Mammary epithelial cell (primary cell): ENCODE measurements at regions of chr22 and their contacts with region 1.

Region 1: DNA sequence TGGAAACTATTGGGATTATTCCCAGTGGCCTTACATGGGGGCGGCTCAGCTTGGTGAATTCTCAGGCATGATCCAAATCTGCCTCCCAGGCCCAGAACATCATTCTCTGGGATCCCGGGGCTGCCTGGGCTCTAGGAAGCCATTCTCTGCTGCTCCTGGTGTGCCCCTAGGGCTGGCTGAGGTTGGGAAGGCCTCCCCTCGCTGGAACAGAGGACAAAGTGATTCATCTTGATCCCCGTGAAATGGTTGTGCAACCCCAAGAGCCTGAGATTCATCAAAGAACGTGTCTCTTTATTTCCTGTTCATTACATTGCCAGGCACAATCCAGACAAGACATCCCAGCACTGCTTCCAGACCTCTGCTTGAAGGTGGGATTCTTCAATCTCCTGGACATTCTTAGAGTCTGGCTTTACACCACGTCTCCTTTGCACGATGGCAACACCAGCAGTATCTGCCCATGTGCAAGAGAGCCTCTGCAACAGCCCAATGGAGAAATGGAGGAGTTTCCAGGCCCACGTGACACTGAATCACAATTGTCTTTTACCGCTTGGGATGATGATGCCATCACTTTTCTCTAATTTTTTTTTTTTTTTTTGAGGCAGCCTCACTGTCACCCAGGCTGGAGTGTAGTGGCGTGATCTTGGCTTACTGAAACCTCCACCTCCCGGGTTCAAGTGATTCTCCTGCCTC is 52.3 kb downstream of the TST start:
- DNase-seq: peak; percentile 41
- H3K4me3 ChIP-seq: no peak overlapping the region
- H3K27ac ChIP-seq: no peak overlapping the region
- H3K4me1 ChIP-seq: no peaks in the 10 kb centered on the region
- H3K27me3 ChIP-seq: no peaks in the 10 kb centered on the region
- CTCF ChIP-seq: no peak

Region 2: DNA sequence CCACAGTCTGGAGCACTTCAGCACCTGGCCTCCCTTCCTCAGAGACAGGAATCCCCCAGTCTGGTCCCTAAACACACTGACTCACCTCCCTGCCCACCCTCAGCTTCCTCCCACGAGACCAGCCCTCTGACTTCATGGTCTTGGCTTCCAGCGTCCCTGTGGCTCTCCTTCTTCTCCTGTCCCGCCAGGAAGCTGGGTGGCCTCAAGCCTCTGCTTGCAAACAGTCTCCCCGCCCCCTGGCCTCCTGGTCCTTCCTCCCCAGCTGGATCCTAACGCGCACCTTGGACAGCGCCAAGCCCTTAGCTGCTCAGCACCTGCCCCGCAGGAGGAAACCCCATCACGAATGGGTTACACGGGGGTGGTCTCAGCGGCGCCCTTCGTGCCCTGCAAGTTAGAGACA is 101.7 kb before region 1 on chr22:
- CTCF ChIA-PET with region 1: no interaction called
- dilution Hi-C with region 1: loop called (anchors 5 kb)
- in situ Hi-C with region 1: loop called in 1 of 2 experiments (anchors 10 kb)
- intact Hi-C with region 1: no loop called
- DNase-seq: peak; percentile 25
- H3K4me3 ChIP-seq: no peak overlapping the region
- H3K27ac ChIP-seq: no peak overlapping the region
- H3K4me1 ChIP-seq: peaks cover 9% of the 10 kb centered on the region
- H3K27me3 ChIP-seq: no peaks in the 10 kb centered on the region
- CTCF ChIP-seq: no peak

Region 3: GRCh38 chr22:36913427-36914389 is 53.3 kb before region 1 on chr22 and contains the start of gene CSF2RB:
- CTCF ChIA-PET with region 1: no interaction called
- dilution Hi-C with region 1: loop called (anchors 5 kb)
- in situ Hi-C with region 1: no loop called
- intact Hi-C with region 1: no loop called
- DNase-seq: no peak
- H3K4me3 ChIP-seq: no peak within 1 kb of the TSS
- H3K27ac ChIP-seq: no peak within 1 kb of the TSS
- H3K4me1 ChIP-seq: peaks cover 4% of the 10 kb centered on the region
- H3K27me3 ChIP-seq: no peaks in the 10 kb centered on the region
- CTCF ChIP-seq: no peak
- total RNA-seq, gene CSF2RB: not detected

Region 4: GRCh38 chr22:37007651-37008050 is 40.7 kb after region 1 on chr22:
- CTCF ChIA-PET with region 1: no interaction called
- dilution Hi-C with region 1: loop called (anchors 5 kb)
- in situ Hi-C with region 1: no loop called
- intact Hi-C with region 1: no loop called
- DNase-seq: no peak
- H3K4me3 ChIP-seq: no peak overlapping the region
- H3K27ac ChIP-seq: no peak overlapping the region
- H3K4me1 ChIP-seq: no peaks in the 10 kb centered on the region
- H3K27me3 ChIP-seq: no peaks in the 10 kb centered on the region
- CTCF ChIP-seq: no peak

Region 5: DNA sequence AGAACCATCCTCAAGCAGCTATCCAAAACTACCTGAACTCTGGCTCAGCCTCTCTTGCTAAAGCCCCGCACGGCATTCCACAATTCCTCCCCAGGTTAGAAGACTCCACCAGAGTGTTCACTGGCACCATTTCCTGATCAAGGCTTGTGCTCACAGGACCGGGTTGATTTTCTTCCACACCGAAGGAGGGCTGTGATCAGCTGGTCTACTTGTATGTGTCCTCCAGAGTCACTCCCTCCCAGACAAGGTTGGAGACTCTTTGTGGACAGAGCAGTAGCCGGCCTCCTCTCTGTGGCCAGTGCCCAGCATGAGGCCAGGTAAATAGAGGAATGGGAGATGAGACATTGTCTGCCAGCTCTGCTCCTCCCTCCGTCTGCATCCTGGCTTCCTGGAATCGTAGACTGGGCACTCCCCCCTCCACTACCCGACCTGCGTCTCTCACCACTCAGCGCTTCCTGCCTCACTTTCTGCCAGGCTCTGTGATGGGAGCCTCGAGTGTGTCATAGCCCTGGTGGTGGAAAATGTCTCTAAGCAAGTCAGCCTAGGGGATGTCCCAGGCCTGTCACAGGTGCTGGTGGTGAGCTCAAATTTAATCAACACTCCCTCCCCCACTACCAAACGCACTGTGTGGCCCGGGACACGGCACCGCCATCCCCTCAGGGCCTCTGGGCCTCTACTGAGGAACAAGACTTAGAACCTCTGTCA is 155.0 kb after region 1 on chr22:
- CTCF ChIA-PET with region 1: no interaction called
- dilution Hi-C with region 1: no loop called
- in situ Hi-C with region 1: no loop called
- intact Hi-C with region 1: no loop called
- DNase-seq: peak; percentile 84
- H3K4me3 ChIP-seq: no peak overlapping the region
- H3K27ac ChIP-seq: peak overlapping the region; percentile 48
- H3K4me1 ChIP-seq: peaks cover 13% of the 10 kb centered on the region
- H3K27me3 ChIP-seq: no peaks in the 10 kb centered on the region
- CTCF ChIP-seq: peak in 1 of 2 donors; percentile 37

Region 6: GRCh38 chr22:37244114-37244921 is 277.3 kb after region 1 on chr22 and contains the start of gene RAC2:
- CTCF ChIA-PET with region 1: no interaction called
- dilution Hi-C with region 1: no loop called
- in situ Hi-C with region 1: no loop called
- intact Hi-C with region 1: no loop called
- DNase-seq: peak; percentile 73
- H3K4me3 ChIP-seq: peak within 1 kb of the TSS; percentile 60 to 83 (median 79)
- H3K27ac ChIP-seq: peak within 1 kb of the TSS; percentile 42
- H3K4me1 ChIP-seq: peaks cover 36% of the 10 kb centered on the region
- H3K27me3 ChIP-seq: no peaks in the 10 kb centered on the region
- CTCF ChIP-seq: no peak
- total RNA-seq, gene RAC2: 13.2 to 119 TPM